Endothelial cell of umbilical vein (primary cell): ENCODE measurements at regions of chr19 and their contacts with region 1.

Region 1: DNA sequence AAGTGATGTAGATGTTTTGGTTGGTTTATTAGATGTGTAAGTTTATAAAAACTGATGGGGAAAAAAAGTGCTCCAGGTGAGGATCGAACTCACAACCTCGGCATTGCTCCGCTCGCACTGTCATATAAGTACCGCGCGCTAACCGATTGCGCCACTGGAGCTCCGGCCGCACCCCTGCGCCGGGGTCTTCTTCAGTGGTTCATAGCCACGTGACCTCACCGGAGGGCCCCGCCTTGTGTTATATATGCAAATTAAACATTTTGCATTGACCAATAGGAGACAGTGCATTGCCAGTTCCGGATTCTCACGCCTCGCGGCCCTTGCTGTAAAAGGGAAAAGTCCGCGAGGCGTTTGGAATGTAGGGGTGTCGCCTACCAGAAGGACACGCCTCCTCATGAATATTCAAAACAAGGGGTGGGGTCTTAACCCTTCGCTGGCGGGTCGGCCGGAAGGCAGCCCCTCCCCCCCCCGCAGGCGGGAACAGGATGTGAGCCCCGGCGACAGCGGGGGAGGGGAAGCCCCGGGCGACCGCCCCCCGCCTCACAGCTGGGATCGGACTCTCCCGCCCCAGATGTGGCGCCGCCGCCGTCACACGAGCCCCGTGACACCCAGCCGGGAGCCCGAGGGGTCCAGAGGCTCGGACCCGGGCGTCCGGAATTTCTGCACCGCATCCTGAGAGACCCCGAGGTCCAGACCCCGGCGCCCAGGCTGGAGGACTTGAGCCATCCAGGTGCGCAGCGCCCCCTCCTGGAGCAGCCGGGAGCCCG is at the start of gene PLEKHG2:
- DNase-seq: peak; percentile 100
- H3K4me3 ChIP-seq: peak within 1 kb of the TSS; percentile 74 to 94 (median 83)
- H3K27ac ChIP-seq: peak within 1 kb of the TSS; percentile 87
- H3K4me1 ChIP-seq: peaks cover 40% of the 10 kb centered on the region
- H3K27me3 ChIP-seq: no peaks in the 10 kb centered on the region
- CTCF ChIP-seq: peak; percentile 88 to 91
- POLR2A ChIP-seq: peak; percentile 65
- total RNA-seq, gene PLEKHG2: 74.1 TPM in 2 replicates

Region 2: DNA sequence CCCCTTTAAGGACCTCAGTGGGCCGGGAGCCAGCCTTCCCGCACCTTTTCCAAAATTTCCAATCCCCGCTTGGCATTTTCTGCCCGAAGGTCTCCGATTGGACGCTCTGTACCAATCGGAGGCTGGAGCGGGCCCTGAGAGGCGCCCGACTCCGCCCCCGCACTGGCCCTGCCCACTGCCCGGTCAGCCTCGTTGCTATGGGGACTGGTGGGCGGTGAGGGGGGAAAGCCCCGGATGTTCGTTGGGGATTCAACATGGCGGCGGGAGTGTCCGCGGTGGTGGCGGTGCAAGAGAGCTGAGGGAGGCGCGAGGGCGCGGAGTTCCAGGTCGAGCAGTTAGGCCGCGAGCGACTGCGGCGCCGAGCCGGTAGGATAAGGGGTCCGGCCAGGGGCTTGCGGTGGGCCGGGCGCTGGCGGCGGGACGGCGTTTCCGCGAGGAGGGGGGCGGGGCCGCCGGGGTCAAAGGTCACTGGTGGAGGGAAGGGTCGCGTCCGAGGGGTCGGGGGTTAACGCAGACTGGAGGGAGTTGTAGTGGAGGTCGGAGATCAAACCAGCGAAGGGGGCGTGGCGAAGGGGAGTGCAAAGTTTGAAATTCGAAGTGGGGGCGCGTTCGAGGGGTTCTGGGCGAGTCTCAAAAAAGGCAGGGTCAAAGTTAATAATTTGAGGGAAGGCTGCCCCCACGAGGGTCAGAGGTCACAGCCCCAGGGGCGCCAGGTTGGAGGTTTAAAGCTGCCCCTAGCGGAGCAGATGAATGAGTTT is 286.6 kb before region 1 on chr19 and contains the start of gene PAK4:
- CTCF ChIA-PET with region 1: interaction called, 6 read pairs
- POLR2A ChIA-PET with region 1: no interaction called
- dilution Hi-C with region 1: no loop called
- intact Hi-C with region 1: loop called (anchors 1 kb)
- DNase-seq: peak; percentile 97
- H3K4me3 ChIP-seq: peak within 1 kb of the TSS; percentile 71 to 97 (median 85)
- H3K27ac ChIP-seq: peak within 1 kb of the TSS; percentile 39
- H3K4me1 ChIP-seq: peaks cover 18% of the 10 kb centered on the region
- H3K27me3 ChIP-seq: no peaks in the 10 kb centered on the region
- CTCF ChIP-seq: no peak
- POLR2A ChIP-seq: peak; percentile 71
- total RNA-seq, gene PAK4: 49.6 and 55.4 TPM in 2 replicates

Region 3: GRCh38 chr19:39341719-39342604 is 70.3 kb before region 1 on chr19 and contains the start of gene SAMD4B:
- CTCF ChIA-PET with region 1: interaction called, 5 read pairs
- POLR2A ChIA-PET with region 1: no interaction called
- dilution Hi-C with region 1: no loop called
- intact Hi-C with region 1: loop called (anchors 1 kb)
- DNase-seq: peak; percentile 97
- H3K4me3 ChIP-seq: peak within 1 kb of the TSS; percentile 65 to 88 (median 73)
- H3K27ac ChIP-seq: peak within 1 kb of the TSS; percentile 56
- H3K4me1 ChIP-seq: peaks cover 13% of the 10 kb centered on the region
- H3K27me3 ChIP-seq: no peaks in the 10 kb centered on the region
- CTCF ChIP-seq: peak; percentile 53 to 84
- POLR2A ChIP-seq: peak; percentile 95
- total RNA-seq, gene SAMD4B: 82.1 and 87.7 TPM in 2 replicates

Region 4: GRCh38 chr19:39390755-39391592 is 21.3 kb before region 1 on chr19 and contains the starts of genes MED29 and PAF1:
- CTCF ChIA-PET with region 1: interaction called, 147 read pairs
- POLR2A ChIA-PET with region 1: interaction called, 4 read pairs
- dilution Hi-C with region 1: no loop called
- intact Hi-C with region 1: no loop called
- DNase-seq: peak; percentile 100
- H3K4me3 ChIP-seq: peak within 1 kb of the TSS; percentile 60 to 84 (median 83)
- H3K27ac ChIP-seq: peak within 1 kb of the TSS; percentile 83
- H3K4me1 ChIP-seq: peaks cover 9% of the 10 kb centered on the region
- H3K27me3 ChIP-seq: no peaks in the 10 kb centered on the region
- CTCF ChIP-seq: peak in 1 of 2 donors; percentile 7
- POLR2A ChIP-seq: peak; percentile 98
- total RNA-seq, gene MED29: 24.7 and 25.5 TPM in 2 replicates
- total RNA-seq, gene PAF1: 53.6 and 55.1 TPM in 2 replicates

Region 5: DNA sequence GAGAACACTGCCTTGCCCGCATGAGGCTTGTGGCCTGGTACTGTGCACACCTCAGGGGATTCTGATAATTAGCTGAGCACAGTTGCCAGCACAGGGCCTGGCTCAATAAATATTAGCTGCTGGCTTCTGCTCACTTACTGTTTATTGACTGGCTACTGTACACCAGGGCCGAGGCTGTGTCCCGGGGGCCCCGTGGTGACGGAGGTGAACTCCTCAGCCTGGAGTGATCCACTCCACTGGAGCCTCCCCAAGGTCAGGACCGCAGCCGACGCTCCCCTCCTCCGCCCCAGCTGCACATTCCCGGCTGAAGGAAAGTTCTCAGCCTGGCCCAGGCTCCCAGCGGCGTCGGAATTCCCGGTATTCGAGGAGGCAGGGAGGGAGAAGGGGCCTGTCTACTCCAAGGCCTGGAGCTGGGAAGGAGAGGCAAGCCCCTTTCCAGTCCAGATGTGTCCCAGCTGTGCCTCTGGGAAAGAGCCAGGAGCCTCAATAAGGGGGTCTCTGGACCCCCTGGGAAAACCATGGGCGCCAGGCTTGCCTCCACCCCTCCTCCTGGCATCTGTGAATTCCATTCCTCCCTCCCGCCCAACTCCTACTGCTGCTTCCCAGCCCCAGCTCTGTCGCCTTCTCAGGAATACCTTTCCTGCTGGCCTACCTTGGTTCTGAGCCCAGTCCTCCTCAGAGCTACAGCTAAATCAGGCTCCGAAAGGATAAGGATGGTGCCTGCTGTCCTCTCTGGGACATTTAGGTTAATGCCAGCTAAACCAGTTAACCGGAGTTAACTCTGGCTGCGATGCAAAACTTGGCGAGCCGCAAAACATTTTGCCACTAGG is 16.2 kb after region 1 on chr19:
- CTCF ChIA-PET with region 1: interaction called, 29 read pairs
- POLR2A ChIA-PET with region 1: interaction called, 10 read pairs
- dilution Hi-C with region 1: no loop called
- intact Hi-C with region 1: loop called (anchors 1 kb)
- DNase-seq: peak; percentile 86
- H3K4me3 ChIP-seq: no peak overlapping the region
- H3K27ac ChIP-seq: peak overlapping the region; percentile 57
- H3K4me1 ChIP-seq: peaks cover 17% of the 10 kb centered on the region
- H3K27me3 ChIP-seq: no peaks in the 10 kb centered on the region
- CTCF ChIP-seq: no peak
- POLR2A ChIP-seq: no peak

Region 6: DNA sequence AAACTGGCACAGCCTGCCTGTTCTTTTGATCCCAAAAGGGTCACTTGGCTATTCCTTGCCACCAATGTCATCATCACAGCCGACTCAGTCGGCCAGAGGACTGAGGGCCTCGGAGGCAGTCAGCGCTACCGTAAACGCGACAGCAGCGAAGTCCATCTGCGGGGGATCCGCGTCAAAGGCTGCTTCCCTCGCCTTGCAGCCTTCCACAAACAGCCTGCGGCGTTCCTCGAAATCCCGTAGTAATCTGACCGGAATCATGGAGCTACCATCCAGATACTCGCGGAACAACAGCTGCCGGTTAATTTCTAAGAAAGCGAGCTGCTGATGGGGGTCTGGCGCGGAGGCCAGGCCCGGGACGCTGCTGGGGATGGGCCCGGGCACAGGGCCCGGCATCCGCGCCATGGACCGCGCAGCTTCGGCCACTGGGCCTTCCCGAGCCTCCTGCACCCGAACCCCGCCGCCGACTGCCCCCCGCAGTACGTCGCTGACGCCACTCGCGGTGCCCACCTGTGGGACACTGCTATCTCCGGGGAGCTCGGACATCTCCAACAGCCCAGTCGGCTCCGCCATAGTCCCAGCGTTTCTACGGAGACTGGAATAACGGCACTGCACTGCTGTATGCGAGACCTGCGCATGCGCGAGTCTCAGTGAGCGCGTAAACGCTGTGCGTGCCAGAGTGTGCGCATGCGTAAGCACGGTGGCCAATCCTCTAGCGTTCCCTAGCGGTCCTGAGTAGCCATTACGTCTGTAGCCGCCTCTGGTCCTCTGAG is 120.1 kb after region 1 on chr19 and contains the start of gene EID2B:
- CTCF ChIA-PET with region 1: interaction called, 4 read pairs
- POLR2A ChIA-PET with region 1: no interaction called
- dilution Hi-C with region 1: no loop called
- intact Hi-C with region 1: loop called (anchors 1 kb)
- DNase-seq: peak; percentile 97
- H3K4me3 ChIP-seq: peak within 1 kb of the TSS; percentile 68 to 93 (median 87)
- H3K27ac ChIP-seq: peak within 1 kb of the TSS; percentile 29
- H3K4me1 ChIP-seq: peaks cover 6% of the 10 kb centered on the region
- H3K27me3 ChIP-seq: no peaks in the 10 kb centered on the region
- CTCF ChIP-seq: peak; percentile 96
- POLR2A ChIP-seq: peak; percentile 90
- total RNA-seq, gene EID2B: 3.0 and 3.9 TPM in 2 replicates

Region 7: DNA sequence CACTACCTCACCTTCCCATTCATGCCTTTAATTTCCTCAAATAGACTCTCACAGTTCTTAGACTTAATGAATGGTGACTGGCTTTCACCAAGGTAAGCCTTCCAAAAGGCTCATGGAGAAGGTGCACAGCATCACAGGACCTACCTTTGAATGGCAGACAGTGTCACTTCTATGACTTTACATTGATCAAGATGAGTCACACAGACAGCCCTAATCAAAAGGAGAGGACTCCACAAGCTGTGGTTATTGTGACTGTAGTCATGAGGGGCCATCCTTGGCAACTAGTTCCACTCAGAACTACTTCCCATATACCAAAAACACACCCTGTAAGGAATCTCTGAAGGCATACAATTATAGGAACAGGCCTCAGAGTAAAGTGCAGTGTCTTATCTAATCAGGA is 249.3 kb after region 1 on chr19:
- CTCF ChIA-PET with region 1: no interaction called
- POLR2A ChIA-PET with region 1: no interaction called
- dilution Hi-C with region 1: no loop called
- intact Hi-C with region 1: no loop called
- DNase-seq: no peak
- H3K4me3 ChIP-seq: no peak overlapping the region
- H3K27ac ChIP-seq: no peak overlapping the region
- H3K4me1 ChIP-seq: no peaks in the 10 kb centered on the region
- H3K27me3 ChIP-seq: no peaks in the 10 kb centered on the region
- CTCF ChIP-seq: no peak
- POLR2A ChIP-seq: no peak